ENCODE measurements at regions of chr1 and their contacts with region 1.

Region 1: GRCh38 chr1:205354259-205354904 is 2.3 kb downstream of the KLHDC8A start:
- DNase-seq: no peak
- ATAC-seq: peak in 3 of 4 donors; percentile 30 to 74 (median 69)
- H3K4me3 ChIP-seq: no peak overlapping the region
- H3K27ac ChIP-seq: no peak overlapping the region
- H3K4me1 ChIP-seq: no peaks in the 10 kb centered on the region
- H3K27me3 ChIP-seq: peaks cover 0 to 15% (median 0%) of the 10 kb centered on the region in 3 donors
- CTCF ChIP-seq: peak; percentile 88

Region 2: GRCh38 chr1:205477759-205478247 is 123.4 kb after region 1 on chr1:
- intact Hi-C with region 1: loop called (anchors 5 kb)
- DNase-seq: no peak
- ATAC-seq: peak in 1 of 4 donors; percentile 48
- H3K4me3 ChIP-seq: no peak overlapping the region
- H3K27ac ChIP-seq: no peak overlapping the region
- H3K4me1 ChIP-seq: no peaks in the 10 kb centered on the region
- H3K27me3 ChIP-seq: peaks cover 0 to 38% (median 8%) of the 10 kb centered on the region in 3 donors
- CTCF ChIP-seq: no peak

Region 3: DNA sequence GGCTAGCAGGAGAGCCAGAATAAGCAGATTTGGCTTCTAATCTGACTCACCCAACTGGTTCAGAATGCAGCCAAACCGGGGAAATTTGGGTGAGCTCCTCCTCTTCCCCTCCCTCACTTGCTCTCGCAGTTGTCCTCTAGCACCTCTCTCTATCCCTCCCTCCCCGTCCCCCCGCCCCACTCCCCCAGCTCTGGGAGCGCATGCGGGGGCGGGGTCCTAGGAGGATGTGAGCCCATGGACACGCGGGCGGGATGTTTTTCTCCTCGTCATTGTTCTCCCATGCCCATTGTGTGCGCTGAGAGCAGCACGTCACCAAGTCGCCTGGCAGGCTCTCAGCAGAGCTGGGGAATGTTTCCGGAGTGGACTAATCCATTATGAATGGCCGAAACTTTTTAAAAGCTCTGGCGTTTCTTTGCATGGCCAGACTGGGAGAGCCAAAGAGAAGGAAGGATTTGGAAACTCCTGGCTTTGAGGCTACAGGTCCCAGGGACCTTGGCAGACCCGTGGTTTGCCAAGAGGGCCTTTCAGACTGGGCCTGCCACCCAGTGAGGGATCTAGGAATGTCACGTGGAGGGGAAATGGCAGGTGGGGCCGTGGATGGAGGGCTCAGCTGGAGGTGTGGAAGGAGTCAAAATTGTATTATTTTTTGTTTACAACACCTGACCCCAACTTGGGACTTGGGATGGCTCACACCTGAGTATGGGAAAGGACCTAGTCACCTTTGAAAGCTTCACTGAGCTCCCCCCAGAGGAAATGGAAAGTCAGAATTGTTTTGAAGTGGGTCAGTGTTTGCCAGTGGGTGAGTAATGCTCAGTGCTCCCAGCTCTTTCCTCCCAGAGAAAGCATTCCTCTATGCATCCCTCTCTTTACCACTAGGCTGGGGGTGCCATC is 189.3 kb after region 1 on chr1:
- intact Hi-C with region 1: no loop called
- DNase-seq: peak; percentile 76 to 80
- ATAC-seq: peak; percentile 68 to 85 (median 80)
- H3K4me3 ChIP-seq: peak overlapping the region; percentile 5
- H3K27ac ChIP-seq: peak overlapping the region; percentile 48
- H3K4me1 ChIP-seq: no peaks in the 10 kb centered on the region
- H3K27me3 ChIP-seq: peaks cover 0 to 39% (median 12%) of the 10 kb centered on the region in 3 donors
- CTCF ChIP-seq: no peak